ENCODE measurements at regions of chr12 and their contacts with region 1.

Region 1: DNA sequence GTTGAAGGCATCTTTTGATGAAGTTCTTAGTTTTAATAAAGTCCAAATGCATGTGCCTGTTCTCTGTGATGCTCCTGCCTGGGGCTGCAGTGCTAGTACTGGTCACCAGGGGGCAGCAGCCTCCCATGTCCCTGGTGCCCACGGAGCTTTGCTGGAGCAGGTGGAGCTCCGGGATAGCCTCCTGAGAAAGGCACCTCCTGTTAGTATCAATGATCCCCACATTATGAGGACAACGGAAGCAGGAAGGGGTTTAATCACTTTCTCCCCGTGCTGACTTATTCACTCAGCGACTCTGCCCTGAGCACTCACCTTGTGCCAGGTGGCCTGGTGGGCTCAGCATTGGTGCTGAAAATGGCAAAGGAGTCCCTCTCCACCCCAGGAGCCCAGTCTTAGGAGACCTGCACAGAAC is 123.0 kb upstream of the PZP start:
- DNase-seq: peak; percentile 47
- H3K4me3 Mint-ChIP-seq: no peak overlapping the region
- H3K27ac Mint-ChIP-seq: no peak overlapping the region
- H3K4me1 Mint-ChIP-seq: peaks cover 20% of the 10 kb centered on the region
- H3K27me3 Mint-ChIP-seq: peaks cover under 1% of the 10 kb centered on the region

Region 2: GRCh38 chr12:9319044-9319841 is 12.0 kb before region 1 on chr12:
- intact Hi-C with region 1: no loop called
- DNase-seq: no peak
- H3K4me3 Mint-ChIP-seq: no peak overlapping the region
- H3K27ac Mint-ChIP-seq: no peak overlapping the region
- H3K4me1 Mint-ChIP-seq: no peaks in the 10 kb centered on the region
- H3K27me3 Mint-ChIP-seq: no peaks in the 10 kb centered on the region

Region 3: DNA sequence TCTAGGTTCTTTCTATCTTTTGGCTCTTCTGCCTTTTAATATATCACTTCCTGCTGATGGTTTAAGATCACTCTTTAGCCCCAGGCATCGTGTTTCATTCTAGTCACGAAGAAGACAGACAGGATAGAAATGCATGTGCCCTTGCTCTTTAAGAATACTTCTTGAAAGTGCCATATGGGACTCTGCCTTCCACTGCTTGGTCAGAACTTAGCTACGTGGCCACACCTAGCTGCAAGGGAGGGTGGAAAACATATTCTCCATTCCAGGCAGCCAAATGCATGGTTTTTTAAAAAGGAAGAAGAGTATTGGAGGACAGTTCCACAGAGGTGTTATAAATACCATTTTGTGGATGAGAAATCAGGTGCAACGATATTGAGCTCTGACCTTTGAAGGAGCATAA is 133.2 kb after region 1 on chr12:
- intact Hi-C with region 1: loop called (anchors 1 kb)
- DNase-seq: no peak
- H3K4me3 Mint-ChIP-seq: no peak overlapping the region
- H3K27ac Mint-ChIP-seq: no peak overlapping the region
- H3K4me1 Mint-ChIP-seq: no peaks in the 10 kb centered on the region
- H3K27me3 Mint-ChIP-seq: peaks cover 4% of the 10 kb centered on the region

Region 4: GRCh38 chr12:9634177-9634803 is 303.1 kb after region 1 on chr12:
- intact Hi-C with region 1: loop called (anchors 1 kb)
- DNase-seq: peak; percentile 64
- H3K4me3 Mint-ChIP-seq: peak overlapping the region; percentile 60
- H3K27ac Mint-ChIP-seq: peak overlapping the region; percentile 63
- H3K4me1 Mint-ChIP-seq: peaks cover 60% of the 10 kb centered on the region
- H3K27me3 Mint-ChIP-seq: peaks cover 3% of the 10 kb centered on the region

Measured in activated T-helper 1 cell treated with anti-CD3 and anti-CD28 coated beads, Interleukin-12 subunit alpha, Interleukin-12 subunit beta, Interleukin-2, Interleukin-4 antibody, amounts not matched to agents 30 ng/mL and 10 ng/mL and 1 ng/mL, durations not matched to agents 14 hours and 24 hours and 36 hours (primary cell).